ENCODE measurements at regions of chr2 and their contacts with region 1.

Region 1: DNA sequence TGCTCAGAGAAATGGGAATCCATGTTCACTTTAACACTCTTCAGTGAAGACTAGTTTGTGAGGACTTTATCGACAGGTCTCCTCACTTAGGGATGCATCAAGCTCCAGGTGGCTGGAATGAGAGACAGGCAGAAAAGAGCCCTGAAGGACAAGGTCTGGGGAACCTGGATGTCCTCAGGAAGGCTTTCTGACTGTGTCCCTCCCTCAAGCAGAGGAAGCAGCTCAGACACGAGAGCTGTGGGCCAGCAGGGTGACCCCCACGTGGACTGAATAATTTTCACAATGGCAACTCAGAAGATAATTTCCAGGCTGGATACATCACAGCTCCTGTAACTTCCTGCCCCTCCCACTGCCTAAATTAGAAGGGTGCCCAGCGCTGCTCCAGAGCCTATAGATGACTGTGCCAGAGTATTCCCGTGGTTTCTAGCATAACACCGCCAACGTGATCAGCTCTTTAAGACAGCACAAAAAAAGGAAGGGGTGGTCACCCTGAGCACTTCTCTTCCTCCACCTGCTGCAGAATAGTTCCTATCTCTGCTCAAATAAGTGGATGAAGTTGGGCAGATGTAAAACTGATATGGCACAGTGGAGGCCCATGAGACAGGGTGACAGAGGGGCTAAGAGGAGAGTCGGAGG is 25.7 kb upstream of the NCK2 start:
- DNase-seq: no peak
- H3K4me3 Mint-ChIP-seq: no peak overlapping the region
- H3K27ac Mint-ChIP-seq: no peak overlapping the region
- H3K4me1 Mint-ChIP-seq: peaks cover 8% of the 10 kb centered on the region
- H3K27me3 Mint-ChIP-seq: no peaks in the 10 kb centered on the region
- CTCF ChIP-seq: no peak

Region 2: DNA sequence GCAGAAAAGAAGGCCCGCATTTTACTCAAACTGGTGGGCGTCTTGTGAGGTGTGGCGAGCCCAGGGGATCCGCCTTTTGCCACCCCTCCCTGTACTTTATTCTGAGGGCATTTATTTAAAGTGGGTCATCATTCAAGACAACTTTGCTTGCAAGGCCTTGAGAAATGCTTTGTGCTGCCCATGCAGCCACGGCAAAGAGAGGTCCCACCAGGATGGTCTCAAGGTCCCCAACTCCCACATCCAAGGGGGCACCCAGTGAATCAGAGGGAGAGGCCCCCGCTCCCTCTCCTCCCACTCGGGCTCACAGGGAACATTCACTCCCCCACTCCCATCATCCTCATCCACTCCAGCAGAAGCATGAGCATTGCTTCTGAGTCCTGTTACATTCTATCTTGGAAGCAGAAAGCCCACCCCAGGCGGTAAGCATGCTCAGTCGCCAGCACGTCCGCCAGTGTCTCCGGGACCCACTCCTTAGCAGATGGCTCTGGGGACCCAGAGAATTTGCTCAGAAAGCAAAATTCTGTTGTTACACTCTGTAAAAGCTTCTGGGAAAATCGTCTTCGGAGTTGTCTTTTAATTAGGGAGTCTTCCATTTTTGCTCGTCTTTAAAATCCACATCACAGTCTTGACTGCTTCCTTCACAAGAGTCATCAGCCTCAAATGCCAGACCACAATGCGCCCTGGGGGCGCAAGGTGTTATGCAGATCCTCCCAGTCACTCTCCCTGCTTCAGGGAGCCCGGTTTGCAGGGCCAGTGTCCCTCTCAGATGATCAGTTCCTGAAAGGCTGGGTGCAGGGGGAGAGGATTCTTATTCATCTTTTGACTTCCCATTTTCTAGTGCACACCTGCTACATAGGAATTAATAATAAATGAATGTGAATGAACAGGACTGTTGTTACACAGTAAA is 73.7 kb before region 1 on chr2:
- CTCF ChIA-PET with region 1: no interaction called
- intact Hi-C with region 1: loop called (anchors 5 kb)
- DNase-seq: no peak
- H3K4me3 Mint-ChIP-seq: no peak overlapping the region
- H3K27ac Mint-ChIP-seq: no peak overlapping the region
- H3K4me1 Mint-ChIP-seq: peaks cover 6% of the 10 kb centered on the region
- H3K27me3 Mint-ChIP-seq: no peaks in the 10 kb centered on the region
- CTCF ChIP-seq: no peak